ACHN (cell line): ENCODE measurements at regions of chr7 and their contacts with region 1.

Region 1: DNA sequence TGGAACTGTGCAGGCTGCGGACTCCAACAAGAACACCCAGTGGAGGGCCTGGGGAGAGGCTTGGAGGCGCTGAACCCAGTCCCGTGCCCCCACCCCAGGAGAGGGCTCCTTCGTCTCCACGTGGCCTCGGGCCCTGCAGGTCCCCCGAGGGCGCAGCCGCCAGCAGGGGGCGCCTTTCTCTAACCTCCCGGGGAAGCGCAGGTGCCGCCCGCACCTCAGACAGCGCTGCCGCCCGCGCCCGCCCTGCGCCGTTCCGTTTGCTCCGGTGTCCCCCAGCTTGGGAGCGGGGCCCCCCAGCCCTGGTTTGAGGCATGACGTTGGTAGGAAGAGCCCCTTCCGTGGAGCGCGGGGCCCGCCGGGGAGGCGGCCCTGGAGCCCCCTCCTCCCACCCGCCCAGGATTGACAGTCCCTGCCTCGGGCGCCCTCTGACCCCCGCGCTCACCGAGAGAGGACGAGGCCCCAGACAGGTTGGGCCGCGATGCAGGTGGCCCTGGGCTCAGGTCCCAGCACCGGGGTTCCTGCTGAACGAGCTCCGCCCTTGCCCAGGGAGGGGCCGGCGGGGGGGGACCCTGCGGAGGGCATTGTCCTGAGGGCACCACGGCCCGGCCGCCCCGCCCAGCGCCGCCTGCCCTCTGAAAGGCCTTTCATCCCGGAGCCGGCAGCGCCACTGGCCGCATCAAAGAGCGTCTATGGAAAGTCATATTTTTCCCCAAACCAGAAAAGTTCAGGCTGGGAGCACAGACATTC is 42.8 kb downstream of the FOXL3 start:
- DNase-seq: peak; percentile 80

Region 2: GRCh38 chr7:490461-491291 is 157.9 kb after region 1 on chr7:
- in situ Hi-C with region 1: loop called (anchors 10 kb)
- DNase-seq: no peak